Motor neuron (in vitro differentiated cells): ENCODE measurements at regions of chr12 and their contacts with region 1.

Region 1: GRCh38 chr12:57462251-57462911 is 2.8 kb downstream of the GLI1 start:
- ATAC-seq: peak; percentile 53 to 70 (median 66)
- H3K4me3 ChIP-seq: peak overlapping the region; percentile 32 to 59 (median 51)
- H3K27ac ChIP-seq: peak overlapping the region in 1 of 2 donors; percentile 71
- H3K4me1 ChIP-seq: peaks cover 23 to 26% of the 10 kb centered on the region in 2 donors

Region 2: GRCh38 chr12:57238854-57239554 is 223.4 kb before region 1 on chr12:
- in situ Hi-C with region 1: loop called in 1 of 9 experiments (anchors 25 kb)
- ATAC-seq: peak; percentile 38 to 52 (median 48)
- H3K4me3 ChIP-seq: peak overlapping the region; percentile 36 to 56 (median 42)
- H3K27ac ChIP-seq: peak overlapping the region; percentile 94 to 100
- H3K4me1 ChIP-seq: peaks cover 68 to 72% of the 10 kb centered on the region in 2 donors

Region 3: GRCh38 chr12:57319678-57320469 is 142.5 kb before region 1 on chr12:
- in situ Hi-C with region 1: loop called in 1 of 9 experiments (anchors 10 kb)
- ATAC-seq: no peak
- H3K4me3 ChIP-seq: no peak overlapping the region
- H3K27ac ChIP-seq: no peak overlapping the region
- H3K4me1 ChIP-seq: no peaks in the 10 kb centered on the region

Region 4: GRCh38 chr12:58067599-58068387 is 605.4 kb after region 1 on chr12:
- in situ Hi-C with region 1: no loop called
- ATAC-seq: peak in 3 of 8 experiments; percentile 90 to 96 (median 95)
- H3K4me3 ChIP-seq: no peak overlapping the region
- H3K27ac ChIP-seq: no peak overlapping the region
- H3K4me1 ChIP-seq: no peaks in the 10 kb centered on the region